H1 (cell line): ENCODE measurements at regions of chr6 and their contacts with region 1.

Region 1: DNA sequence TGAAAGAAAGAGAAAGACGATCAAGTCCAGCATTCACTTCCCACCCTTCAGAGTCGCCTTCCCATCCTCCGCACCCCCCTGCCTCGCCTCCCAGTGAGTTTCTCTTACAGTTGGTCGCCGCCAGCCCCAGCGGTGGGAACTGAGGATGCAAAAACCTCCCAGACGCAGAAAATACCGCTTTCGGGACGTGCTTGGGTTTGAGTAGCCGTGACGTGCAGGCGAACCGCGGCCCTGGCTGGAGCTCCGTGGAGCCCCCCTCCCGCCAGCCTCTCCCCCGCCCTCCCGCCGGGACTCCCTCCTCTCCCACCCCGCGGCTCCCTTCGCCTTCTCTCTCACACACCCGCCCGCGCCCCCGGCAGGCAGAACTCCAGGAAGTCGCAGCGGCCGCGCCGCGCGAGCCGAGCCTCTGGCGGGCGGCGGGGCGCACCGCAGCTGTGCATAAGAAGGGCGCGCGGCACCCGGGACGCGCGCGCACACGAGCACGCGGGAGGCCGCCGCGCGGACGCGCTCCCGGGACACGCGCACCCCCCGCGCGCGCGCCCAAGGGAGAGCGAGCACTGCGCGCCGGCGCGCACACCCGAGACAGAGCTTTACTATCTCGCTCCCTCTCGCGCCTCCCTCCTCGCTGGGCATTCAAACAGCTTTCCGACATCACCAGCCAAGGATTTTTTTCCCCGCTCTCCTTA is at the start of gene ADGRB3:
- DNase-seq: peak in 1 of 2 experiments; percentile 64
- H3K4me3 ChIP-seq: peak within 1 kb of the TSS; percentile 70 to 97 (median 83)
- H3K27ac ChIP-seq: no peak within 1 kb of the TSS
- H3K4me1 ChIP-seq: peaks cover 0 to 9% (median 5%) of the 10 kb centered on the region in 4 experiments; a peak in 5 of 7 replicates
- H3K27me3 ChIP-seq: peaks cover 0 to 25% (median 13%) of the 10 kb centered on the region in 4 experiments; a peak in 6 of 7 replicates
- CTCF ChIP-seq: no peak
- EP300 ChIP-seq: no peak
- POLR2A ChIP-seq: no peak
- RAD21 ChIP-seq: no peak
- total RNA-seq, gene ADGRB3: 0.94 and 1.2 TPM in 2 replicates

Region 2: DNA sequence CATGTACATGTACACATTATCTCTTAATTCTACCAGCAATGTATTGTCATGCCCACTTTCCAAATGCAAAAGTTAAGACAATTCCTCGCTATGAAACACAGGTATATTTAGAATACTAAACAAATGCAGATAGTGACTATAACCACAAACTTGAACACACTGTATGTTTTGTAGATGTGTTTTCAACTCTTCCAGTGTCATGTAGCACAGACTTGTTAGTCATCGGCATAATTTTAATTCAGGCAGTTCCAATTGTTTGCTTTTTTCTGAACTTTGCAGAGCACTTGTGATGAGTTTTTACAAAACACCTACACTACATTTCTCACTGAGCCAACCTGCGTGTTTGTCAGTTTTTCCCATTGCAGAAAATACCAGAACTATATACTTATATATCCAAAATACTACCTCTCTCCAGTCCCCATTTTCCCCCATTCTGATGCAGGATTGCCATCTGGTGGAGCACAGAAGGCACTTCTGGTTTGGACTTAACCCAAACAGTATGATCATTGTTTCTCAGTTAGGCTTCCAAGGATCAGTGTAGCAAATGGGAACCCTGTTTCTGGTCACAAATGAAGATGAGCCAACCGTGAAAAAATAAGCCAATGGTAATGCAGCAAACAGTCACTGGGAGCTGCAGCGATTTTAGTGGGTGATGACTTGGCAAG is 143.6 kb after region 1 on chr6:
- CTCF ChIA-PET with region 1: interaction called, 119 read pairs
- POLR2A ChIA-PET with region 1: interaction called, 5 read pairs
- DNase-seq: peak; percentile 7 to 50
- H3K4me3 ChIP-seq: no peak overlapping the region
- H3K27ac ChIP-seq: no peak overlapping the region
- H3K4me1 ChIP-seq: no peaks in the 10 kb centered on the region
- H3K27me3 ChIP-seq: no peaks in the 10 kb centered on the region
- CTCF ChIP-seq: peak; percentile 35 to 86 (median 86)
- EP300 ChIP-seq: no peak
- POLR2A ChIP-seq: no peak
- RAD21 ChIP-seq: peak; percentile 94 to 96

Region 3: GRCh38 chr6:68967549-68968300 is 332.9 kb after region 1 on chr6:
- CTCF ChIA-PET with region 1: interaction called, 29 read pairs
- POLR2A ChIA-PET with region 1: no interaction called
- DNase-seq: peak in 1 of 2 experiments; percentile 74
- H3K4me3 ChIP-seq: no peak overlapping the region
- H3K27ac ChIP-seq: no peak overlapping the region
- H3K4me1 ChIP-seq: no peaks in the 10 kb centered on the region
- H3K27me3 ChIP-seq: no peaks in the 10 kb centered on the region
- CTCF ChIP-seq: peak; percentile 43 to 82 (median 77)
- EP300 ChIP-seq: no peak
- POLR2A ChIP-seq: no peak
- RAD21 ChIP-seq: peak; percentile 82 to 86